ENCODE measurements at regions of chr5 and their contacts with region 1.

Region 1: GRCh38 chr5:96113170-96113939 is 151.7 kb upstream of the ELL2 start:
- DNase-seq: peak; percentile 59
- H3K4me3 Mint-ChIP-seq: no peak overlapping the region
- H3K27ac Mint-ChIP-seq: peak overlapping the region; percentile 76
- H3K4me1 Mint-ChIP-seq: peaks cover 11% of the 10 kb centered on the region
- H3K27me3 Mint-ChIP-seq: no peaks in the 10 kb centered on the region

Region 2: GRCh38 chr5:96079075-96079474 is 34.3 kb before region 1 on chr5:
- intact Hi-C with region 1: loop called (anchors 1 kb)
- DNase-seq: no peak
- H3K4me3 Mint-ChIP-seq: peak overlapping the region; percentile 42
- H3K27ac Mint-ChIP-seq: peak overlapping the region; percentile 87
- H3K4me1 Mint-ChIP-seq: peaks cover 45% of the 10 kb centered on the region
- H3K27me3 Mint-ChIP-seq: no peaks in the 10 kb centered on the region

Region 3: GRCh38 chr5:96090215-96090614 is 23.1 kb before region 1 on chr5:
- intact Hi-C with region 1: no loop called
- DNase-seq: no peak
- H3K4me3 Mint-ChIP-seq: no peak overlapping the region
- H3K27ac Mint-ChIP-seq: no peak overlapping the region
- H3K4me1 Mint-ChIP-seq: no peaks in the 10 kb centered on the region
- H3K27me3 Mint-ChIP-seq: no peaks in the 10 kb centered on the region

Region 4: DNA sequence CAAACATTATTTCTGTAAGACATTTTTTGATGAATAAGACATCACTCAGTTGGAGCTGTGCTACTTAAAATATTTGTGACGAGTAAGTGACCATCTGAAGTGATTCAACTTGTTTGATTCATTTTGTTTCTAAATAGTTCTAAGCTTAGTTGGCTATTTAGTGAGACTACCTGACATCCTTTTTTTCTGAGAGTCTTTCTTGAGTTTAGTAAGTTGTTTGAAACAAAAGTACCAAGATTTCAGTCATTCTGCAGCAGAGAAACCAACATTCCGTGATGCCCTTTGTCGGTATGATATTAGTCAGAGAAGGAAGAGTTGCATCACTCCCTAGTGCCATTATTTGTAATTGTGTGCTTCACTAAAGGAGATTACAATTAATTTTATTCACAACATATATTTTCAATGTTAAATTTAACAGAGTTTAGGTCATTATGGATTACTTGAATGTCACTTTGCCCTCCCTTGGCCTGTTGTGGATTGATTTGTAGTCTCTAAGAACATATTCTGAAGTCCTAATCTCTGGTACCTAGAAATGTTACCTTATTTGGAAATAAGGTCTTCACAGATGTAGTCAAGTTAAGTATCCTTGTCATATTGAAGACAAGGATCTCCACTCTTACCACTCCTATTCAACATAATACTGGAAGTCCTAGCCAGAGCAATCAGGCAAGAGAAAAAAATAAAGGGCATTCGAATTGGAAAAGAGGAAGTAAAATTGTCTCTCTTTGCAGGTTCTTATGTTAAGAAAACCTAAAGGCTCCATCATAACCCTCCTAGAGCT is 107.4 kb after region 1 on chr5:
- intact Hi-C with region 1: loop called (anchors 5 kb)
- DNase-seq: no peak
- H3K4me3 Mint-ChIP-seq: no peak overlapping the region
- H3K27ac Mint-ChIP-seq: peak overlapping the region; percentile 60
- H3K4me1 Mint-ChIP-seq: peaks cover 2% of the 10 kb centered on the region
- H3K27me3 Mint-ChIP-seq: no peaks in the 10 kb centered on the region

Region 5: DNA sequence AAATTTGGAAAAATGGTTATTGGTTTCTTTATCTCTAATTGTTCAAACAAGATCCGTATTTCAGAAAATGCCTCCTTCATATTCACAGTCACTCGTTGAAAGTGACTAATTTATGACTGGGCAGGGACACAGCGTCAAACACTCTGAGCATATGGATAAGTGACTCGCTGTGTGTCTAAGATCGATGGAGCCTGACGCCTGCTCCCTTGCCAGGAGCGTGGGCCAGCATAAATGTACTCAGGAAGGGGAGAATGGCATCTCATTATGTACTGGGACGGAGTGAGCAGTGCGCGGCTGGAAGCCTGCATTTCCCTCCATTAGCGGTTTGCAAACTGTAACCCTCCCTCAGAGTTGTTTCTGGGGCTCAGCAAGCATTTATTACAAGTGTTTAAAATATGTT is 469.0 kb after region 1 on chr5:
- intact Hi-C with region 1: no loop called
- DNase-seq: no peak
- H3K4me3 Mint-ChIP-seq: no peak overlapping the region
- H3K27ac Mint-ChIP-seq: no peak overlapping the region
- H3K4me1 Mint-ChIP-seq: peaks cover 4% of the 10 kb centered on the region
- H3K27me3 Mint-ChIP-seq: peaks cover 26% of the 10 kb centered on the region

Measured in activated CD4-positive, alpha-beta T cell treated with anti-CD3 and anti-CD28 coated beads, Interleukin-2, amount 10 ng/mL, durations not matched to agents 24 days and 14 days (primary cell).